PC-9 (cell line): ENCODE measurements at regions of chr6 and their contacts with region 1.

Region 1: GRCh38 chr6:55636405-55637102 is 57.6 kb upstream of the HMGCLL1 start:
- DNase-seq: peak; percentile 25 to 86
- H3K4me3 ChIP-seq: no peak overlapping the region
- H3K27ac ChIP-seq: peak overlapping the region; percentile 51
- H3K4me1 ChIP-seq: peaks cover 20% of the 10 kb centered on the region
- H3K27me3 ChIP-seq: no peaks in the 10 kb centered on the region
- CTCF ChIP-seq: no peak

Region 2: DNA sequence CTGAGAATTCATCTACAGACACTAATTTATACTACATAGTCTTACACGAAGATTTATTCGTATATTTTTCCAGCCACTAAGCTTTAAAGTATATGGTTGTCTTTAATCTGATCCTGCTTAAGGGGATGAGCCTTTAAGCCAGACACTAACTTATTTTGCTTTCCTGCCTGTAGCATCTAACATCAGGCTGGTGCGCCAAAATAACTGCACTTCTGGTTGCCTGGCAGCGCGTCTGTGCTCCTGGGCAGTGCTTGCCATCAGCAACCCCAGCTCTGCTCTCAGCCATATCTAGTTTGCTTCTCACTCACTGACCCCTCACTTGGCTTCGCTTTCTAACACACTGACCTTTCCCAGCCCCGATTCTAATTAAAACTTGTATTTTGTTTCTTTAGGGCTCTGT is 79.4 kb before region 1 on chr6:
- CTCF ChIA-PET with region 1: no interaction called
- POLR2A ChIA-PET with region 1: no interaction called
- intact Hi-C with region 1: no loop called
- DNase-seq: no peak
- H3K4me3 ChIP-seq: no peak overlapping the region
- H3K27ac ChIP-seq: no peak overlapping the region
- H3K4me1 ChIP-seq: no peaks in the 10 kb centered on the region
- H3K27me3 ChIP-seq: peaks cover 11% of the 10 kb centered on the region; the same call in 1 of the 2 replicates
- CTCF ChIP-seq: no peak

Region 3: DNA sequence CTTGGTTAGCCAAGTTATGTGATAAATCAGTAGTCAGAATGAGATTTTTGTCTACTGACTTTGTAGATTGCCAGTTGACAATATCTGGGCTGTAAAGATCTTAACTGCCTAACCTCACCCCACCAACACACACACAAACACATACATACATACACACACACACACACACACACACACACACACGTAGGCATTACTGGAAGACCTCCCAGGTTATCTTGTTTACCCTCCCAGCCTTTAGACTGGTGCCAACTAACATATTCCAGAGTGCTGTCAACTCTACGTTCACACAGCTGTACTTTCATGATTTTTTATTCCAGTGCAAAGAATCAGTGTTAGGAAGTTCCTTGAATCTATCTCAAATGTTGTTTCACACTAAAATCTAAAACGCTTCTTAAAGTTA is 199.9 kb after region 1 on chr6:
- CTCF ChIA-PET with region 1: no interaction called
- POLR2A ChIA-PET with region 1: interaction called, 16 read pairs
- intact Hi-C with region 1: no loop called
- DNase-seq: no peak
- H3K4me3 ChIP-seq: no peak overlapping the region
- H3K27ac ChIP-seq: no peak overlapping the region
- H3K4me1 ChIP-seq: peaks cover 1% of the 10 kb centered on the region; the same call in 1 of the 2 replicates
- H3K27me3 ChIP-seq: no peaks in the 10 kb centered on the region
- CTCF ChIP-seq: no peak